ENCODE measurements at regions of chr5 and their contacts with region 1.

Region 1: GRCh38 chr5:178069909-178070308 is 43.4 kb upstream of the N4BP3 start:
- DNase-seq: peak; percentile 82
- H3K4me3 ChIP-seq: no peak overlapping the region
- H3K27ac ChIP-seq: peak overlapping the region; percentile 89
- H3K4me1 ChIP-seq: peaks cover 84% of the 10 kb centered on the region
- CTCF ChIP-seq: peak; percentile 89

Region 2: GRCh38 chr5:177592010-177592834 is 477.7 kb before region 1 on chr5 and contains the start of gene TMED9:
- CTCF ChIA-PET with region 1: no interaction called
- POLR2A ChIA-PET with region 1: no interaction called
- intact Hi-C with region 1: loop called (anchors 10 kb)
- DNase-seq: peak; percentile 90
- H3K4me3 ChIP-seq: peak within 1 kb of the TSS; percentile 91
- H3K27ac ChIP-seq: peak within 1 kb of the TSS; percentile 73
- H3K4me1 ChIP-seq: peaks cover 16% of the 10 kb centered on the region
- CTCF ChIP-seq: no peak
- total RNA-seq, gene TMED9: 67.6 and 89.7 TPM in 2 replicates

Region 3: DNA sequence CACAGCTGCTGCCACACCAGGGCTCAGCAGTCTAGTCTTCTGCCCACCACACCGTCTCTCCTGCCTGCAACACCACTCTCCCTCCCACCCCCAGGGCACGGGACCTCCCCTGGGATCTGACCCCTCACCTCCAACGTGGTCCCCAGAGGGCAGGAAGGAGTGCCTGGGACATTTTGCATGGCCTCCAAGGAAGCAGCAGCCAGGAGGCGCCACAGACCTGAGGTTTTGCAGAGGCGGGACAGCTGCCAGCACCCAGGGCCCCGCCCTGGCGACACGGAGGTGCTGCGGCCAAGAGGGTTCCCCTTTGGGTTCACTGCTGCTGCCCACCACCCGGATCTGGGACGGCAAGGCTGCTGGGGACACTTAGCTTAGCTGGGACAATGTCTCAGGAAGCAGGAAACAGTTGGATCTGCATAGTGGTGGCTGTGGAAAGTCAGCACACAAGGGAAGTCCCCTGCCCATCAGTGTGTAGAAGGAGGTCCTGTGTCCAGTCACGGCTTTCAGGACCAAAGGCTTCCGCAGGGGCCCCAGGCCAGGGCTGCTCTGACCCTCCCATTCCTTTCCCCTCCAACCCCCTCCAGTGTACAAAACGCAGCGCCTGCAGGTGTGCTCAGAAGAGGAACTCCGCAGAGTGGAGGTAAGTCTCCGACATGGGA is 87.7 kb before region 1 on chr5:
- CTCF ChIA-PET with region 1: no interaction called
- POLR2A ChIA-PET with region 1: no interaction called
- intact Hi-C with region 1: no loop called
- DNase-seq: peak; percentile 65
- H3K4me3 ChIP-seq: no peak overlapping the region
- H3K27ac ChIP-seq: no peak overlapping the region
- H3K4me1 ChIP-seq: peaks cover 8% of the 10 kb centered on the region
- CTCF ChIP-seq: peak; percentile 77